ENCODE measurements at regions of chr19 and their contacts with region 1.

Region 1: GRCh38 chr19:2061495-2062381 is 10.7 kb upstream of the MKNK2 start:
- DNase-seq: peak; percentile 99 to 100 (median 99)
- ATAC-seq: peak; percentile 75 to 92 (median 88)
- H3K4me3 ChIP-seq: peak overlapping the region; percentile 35 to 95 (median 72)
- H3K27ac ChIP-seq: peak overlapping the region; percentile 97 to 100 (median 100)
- H3K4me1 ChIP-seq: peaks cover 10 to 60% (median 48%) of the 10 kb centered on the region in 12 donors
- H3K27me3 ChIP-seq: no peaks in the 10 kb centered on the region
- CTCF ChIP-seq: peak in 3 of 12 donors; percentile 11 to 29 (median 12)
- POLR2A ChIP-seq: peak; percentile 15 to 56

Region 2: DNA sequence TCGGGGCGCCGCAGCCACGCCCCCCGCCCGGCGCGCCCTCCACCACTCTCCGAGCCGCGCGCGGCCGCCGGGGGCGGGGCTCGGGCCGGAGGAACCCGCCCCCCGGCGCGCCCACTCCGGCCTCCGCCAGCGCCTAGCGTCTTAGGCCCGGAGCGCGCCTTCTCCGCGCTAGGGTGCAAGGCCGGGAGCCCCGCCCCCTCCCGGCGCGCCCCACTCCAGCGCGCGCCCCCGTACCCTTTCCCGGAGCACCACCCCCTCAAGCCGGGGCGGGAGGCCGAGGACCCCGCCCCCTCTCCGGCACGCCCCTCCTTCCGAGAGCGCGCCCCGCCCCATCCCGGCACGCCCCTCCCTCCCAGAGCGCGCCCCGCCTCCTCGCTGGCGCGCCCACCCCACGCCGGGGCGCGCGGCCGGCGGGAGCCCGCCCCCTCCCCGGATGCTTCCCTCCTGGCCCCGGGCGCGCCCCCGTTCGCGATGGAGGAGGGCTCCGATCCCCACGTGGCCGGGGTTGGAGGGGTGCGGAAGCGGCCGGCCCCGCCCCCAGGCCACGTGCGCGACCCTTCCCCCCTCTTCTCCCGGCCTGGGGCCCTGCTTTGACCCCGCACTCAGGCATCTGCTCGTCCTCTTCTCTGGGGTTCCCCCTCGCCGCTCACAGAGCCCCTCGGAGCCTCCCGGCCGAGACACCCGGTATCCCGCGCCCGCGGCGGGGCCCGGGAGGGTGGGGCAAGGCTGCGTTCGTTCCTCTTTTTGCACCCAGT is 197.8 kb before region 1 on chr19:
- intact Hi-C with region 1: loop called in 1 of 10 experiments (anchors 10 kb)
- DNase-seq: peak; percentile 93 to 96 (median 93)
- ATAC-seq: peak; percentile 66 to 83 (median 82)
- H3K4me3 ChIP-seq: peak overlapping the region; percentile 59 to 90 (median 72)
- H3K27ac ChIP-seq: peak overlapping the region; percentile 66 to 98 (median 90)
- H3K4me1 ChIP-seq: peaks cover 0 to 50% (median 36%) of the 10 kb centered on the region in 12 donors
- H3K27me3 ChIP-seq: no peaks in the 10 kb centered on the region
- CTCF ChIP-seq: no peak
- POLR2A ChIP-seq: peak in 1 of 2 donors; percentile 39

Region 3: GRCh38 chr19:1929021-1929742 is 132.6 kb before region 1 on chr19:
- intact Hi-C with region 1: loop called in 3 of 10 experiments (anchors 2 to 5 kb)
- DNase-seq: peak; percentile 73 to 89 (median 78)
- ATAC-seq: peak; percentile 62 to 94 (median 90)
- H3K4me3 ChIP-seq: peak overlapping the region in 11 of 12 donors; percentile 21 to 59 (median 45)
- H3K27ac ChIP-seq: no peak overlapping the region
- H3K4me1 ChIP-seq: peaks cover 0 to 15% (median 10%) of the 10 kb centered on the region in 12 donors
- H3K27me3 ChIP-seq: no peaks in the 10 kb centered on the region
- CTCF ChIP-seq: peak; percentile 82 to 95 (median 90)
- POLR2A ChIP-seq: no peak

Region 4: GRCh38 chr19:1935484-1936208 is 126.1 kb before region 1 on chr19:
- intact Hi-C with region 1: loop called in 1 of 10 experiments (anchors 5 kb)
- DNase-seq: peak in 2 of 5 donors; percentile 61 to 69
- ATAC-seq: peak in 1 of 4 donors; percentile 8
- H3K4me3 ChIP-seq: no peak overlapping the region
- H3K27ac ChIP-seq: peak overlapping the region in 3 of 12 donors; percentile 4 to 60 (median 25)
- H3K4me1 ChIP-seq: peaks cover 3 to 22% (median 11%) of the 10 kb centered on the region in 12 donors
- H3K27me3 ChIP-seq: no peaks in the 10 kb centered on the region
- CTCF ChIP-seq: no peak
- POLR2A ChIP-seq: no peak

Region 5: GRCh38 chr19:2050991-2051772 is 10.6 kb before region 1 on chr19 and contains the start of gene MKNK2:
- intact Hi-C with region 1: loop called in 1 of 10 experiments (anchors 1 kb)
- DNase-seq: peak; percentile 94 to 98 (median 94)
- ATAC-seq: peak; percentile 53 to 78 (median 70)
- H3K4me3 ChIP-seq: peak within 1 kb of the TSS; percentile 71 to 99 (median 95)
- H3K27ac ChIP-seq: peak within 1 kb of the TSS; percentile 83 to 99 (median 96)
- H3K4me1 ChIP-seq: peaks cover 24 to 79% (median 66%) of the 10 kb centered on the region in 12 donors
- H3K27me3 ChIP-seq: no peaks in the 10 kb centered on the region
- CTCF ChIP-seq: peak; percentile 48 to 80 (median 63)
- POLR2A ChIP-seq: peak; percentile 99
- total RNA-seq, gene MKNK2: 129 to 318 (median 155) TPM

Region 6: GRCh38 chr19:2084993-2085720 is 23.4 kb after region 1 on chr19:
- intact Hi-C with region 1: no loop called
- DNase-seq: peak; percentile 67 to 87 (median 72)
- ATAC-seq: peak in 3 of 4 donors; percentile 26 to 62 (median 56)
- H3K4me3 ChIP-seq: peak overlapping the region in 5 of 12 donors; percentile 16 to 66 (median 34)
- H3K27ac ChIP-seq: peak overlapping the region in 5 of 12 donors; percentile 16 to 92 (median 62)
- H3K4me1 ChIP-seq: peaks cover under 1 to 95% (median 14%) of the 10 kb centered on the region in 12 donors
- H3K27me3 ChIP-seq: no peaks in the 10 kb centered on the region
- CTCF ChIP-seq: no peak
- POLR2A ChIP-seq: no peak

Measured in heart left ventricle (tissue), 16 donors.